Naive thymus-derived CD4-positive, alpha-beta T cell (primary cell): ENCODE measurements at regions of chrX and their contacts with region 1.

Region 1: DNA sequence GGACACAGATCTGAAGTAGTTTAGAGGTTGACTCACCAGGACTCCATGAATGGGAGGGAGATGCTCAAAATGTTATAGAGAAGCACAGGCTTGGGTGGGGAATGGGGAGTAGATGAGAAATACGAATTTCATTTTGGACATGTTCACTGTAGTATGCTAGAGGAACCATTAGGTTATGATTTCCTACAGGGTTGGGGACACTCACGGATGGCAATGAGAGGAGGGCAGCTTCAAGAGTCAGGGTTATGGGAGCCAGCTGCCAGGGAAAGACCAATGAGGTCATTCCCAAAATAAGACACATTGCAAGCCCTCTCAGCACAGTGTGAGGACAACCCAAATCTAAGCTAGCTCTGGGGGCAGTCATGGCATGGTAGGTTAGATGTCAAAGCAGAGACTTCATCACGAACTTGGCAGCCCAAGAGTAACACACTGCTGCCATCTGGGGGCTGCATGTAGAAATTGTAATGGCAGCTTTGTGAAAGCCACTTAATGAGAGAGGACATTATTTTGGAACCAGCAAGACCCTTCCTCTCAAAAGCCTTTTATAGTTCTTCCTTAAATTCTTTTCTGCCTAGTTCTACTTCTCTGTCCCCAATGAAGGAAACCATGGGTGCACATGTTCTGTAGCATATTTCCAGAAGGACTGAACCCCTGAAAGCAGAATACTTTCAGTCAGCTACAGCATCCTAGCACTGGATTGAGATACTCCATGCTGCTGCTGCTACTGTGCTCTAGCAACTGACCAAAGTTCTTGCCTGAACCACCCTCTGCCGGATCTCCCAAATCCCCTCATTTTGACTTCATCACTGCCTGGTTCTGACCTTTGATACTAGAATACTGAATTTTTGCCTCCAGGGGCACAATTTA is 16.2 kb upstream of the ZCCHC12 start:
- DNase-seq: peak in 6 of 9 donors; percentile 9 to 37 (median 23)
- ATAC-seq: peak; percentile 72
- H3K4me3 ChIP-seq: no peak overlapping the region
- H3K4me3 Mint-ChIP-seq: no peak overlapping the region
- H3K27ac ChIP-seq: no peak overlapping the region
- H3K27ac Mint-ChIP-seq: no peak overlapping the region
- H3K4me1 ChIP-seq: no peaks in the 10 kb centered on the region
- H3K4me1 Mint-ChIP-seq: peaks cover 0 to 2% (median 0%) of the 10 kb centered on the region in 7 donors
- H3K27me3 ChIP-seq: no peaks in the 10 kb centered on the region
- H3K27me3 Mint-ChIP-seq: peaks cover 0 to 18% (median 9%) of the 10 kb centered on the region in 5 donors

Region 2: DNA sequence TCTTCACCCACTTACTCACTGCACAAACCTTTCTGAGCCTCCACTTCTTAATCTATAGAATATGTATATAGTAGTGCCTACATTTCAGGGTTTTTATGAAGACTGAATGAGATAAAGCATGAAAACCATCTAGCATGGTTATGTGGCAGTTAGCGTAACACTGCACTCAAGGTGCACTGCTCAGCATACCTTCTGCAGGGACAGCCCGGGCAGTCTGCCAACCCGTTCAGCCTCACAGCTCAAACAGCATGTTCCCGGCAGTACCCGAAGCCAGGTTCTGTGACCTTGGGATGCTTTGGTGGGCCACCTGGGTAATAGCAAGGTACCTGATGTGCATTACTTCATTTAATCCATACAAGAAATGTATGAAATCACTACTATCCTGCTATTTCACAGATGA is 230.3 kb before region 1 on chrX:
- CTCF ChIA-PET with region 1: no interaction called
- POLR2A ChIA-PET with region 1: no interaction called
- intact Hi-C with region 1: no loop called
- DNase-seq: no peak
- ATAC-seq: no peak
- H3K4me3 ChIP-seq: no peak overlapping the region
- H3K4me3 Mint-ChIP-seq: no peak overlapping the region
- H3K27ac ChIP-seq: no peak overlapping the region
- H3K27ac Mint-ChIP-seq: no peak overlapping the region
- H3K4me1 ChIP-seq: no peaks in the 10 kb centered on the region
- H3K4me1 Mint-ChIP-seq: no peaks in the 10 kb centered on the region
- H3K27me3 ChIP-seq: no peaks in the 10 kb centered on the region
- H3K27me3 Mint-ChIP-seq: no peaks in the 10 kb centered on the region

Region 3: DNA sequence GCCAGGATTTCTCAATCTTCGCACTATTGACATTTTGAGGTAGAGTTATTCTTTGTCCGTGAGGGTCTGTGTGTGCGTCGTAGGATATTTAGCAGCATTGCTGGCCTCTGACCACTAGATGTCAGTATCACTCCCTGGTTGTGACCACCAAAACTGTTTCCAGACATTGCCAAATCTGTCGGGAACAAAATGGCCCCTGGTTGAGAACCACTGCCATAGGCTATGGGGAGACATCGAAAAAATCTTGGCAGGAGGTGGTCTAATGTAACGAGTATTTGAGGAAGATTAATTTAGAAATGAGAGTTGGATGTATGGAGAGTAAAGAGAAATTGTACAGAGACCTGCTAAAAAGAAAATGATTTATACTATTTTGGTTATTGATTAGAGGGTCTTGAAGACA is 203.4 kb before region 1 on chrX:
- CTCF ChIA-PET with region 1: interaction called, 3 read pairs
- POLR2A ChIA-PET with region 1: no interaction called
- intact Hi-C with region 1: loop called in 1 of 2 experiments (anchors 2 kb)
- DNase-seq: peak in 8 of 9 donors; percentile 2 to 40 (median 25)
- ATAC-seq: peak; percentile 77
- H3K4me3 ChIP-seq: no peak overlapping the region
- H3K4me3 Mint-ChIP-seq: peak overlapping the region in 6 of 10 donors; percentile 3 to 50 (median 39)
- H3K27ac ChIP-seq: no peak overlapping the region
- H3K27ac Mint-ChIP-seq: peak overlapping the region in 8 of 9 donors; percentile 33 to 91 (median 76)
- H3K4me1 ChIP-seq: no peaks in the 10 kb centered on the region
- H3K4me1 Mint-ChIP-seq: peaks cover 8 to 29% (median 20%) of the 10 kb centered on the region in 7 donors
- H3K27me3 ChIP-seq: no peaks in the 10 kb centered on the region
- H3K27me3 Mint-ChIP-seq: no peaks in the 10 kb centered on the region

Region 4: GRCh38 chrX:118644378-118644777 is 163.0 kb before region 1 on chrX:
- CTCF ChIA-PET with region 1: no interaction called
- POLR2A ChIA-PET with region 1: no interaction called
- intact Hi-C with region 1: loop called in 1 of 2 experiments (anchors 5 kb)
- DNase-seq: no peak
- ATAC-seq: no peak
- H3K4me3 ChIP-seq: no peak overlapping the region
- H3K4me3 Mint-ChIP-seq: no peak overlapping the region
- H3K27ac ChIP-seq: no peak overlapping the region
- H3K27ac Mint-ChIP-seq: peak overlapping the region in 2 of 9 donors; percentile 51 to 66
- H3K4me1 ChIP-seq: no peaks in the 10 kb centered on the region
- H3K4me1 Mint-ChIP-seq: peaks cover 0 to 6% (median 0%) of the 10 kb centered on the region in 7 donors
- H3K27me3 ChIP-seq: no peaks in the 10 kb centered on the region
- H3K27me3 Mint-ChIP-seq: no peaks in the 10 kb centered on the region

Region 5: GRCh38 chrX:118761939-118762707 is 45.3 kb before region 1 on chrX:
- CTCF ChIA-PET with region 1: no interaction called
- POLR2A ChIA-PET with region 1: no interaction called
- intact Hi-C with region 1: loop called in 1 of 2 experiments (anchors 1 kb)
- DNase-seq: no peak
- ATAC-seq: no peak
- H3K4me3 ChIP-seq: no peak overlapping the region
- H3K4me3 Mint-ChIP-seq: no peak overlapping the region
- H3K27ac ChIP-seq: no peak overlapping the region
- H3K27ac Mint-ChIP-seq: no peak overlapping the region
- H3K4me1 ChIP-seq: no peaks in the 10 kb centered on the region
- H3K4me1 Mint-ChIP-seq: no peaks in the 10 kb centered on the region
- H3K27me3 ChIP-seq: no peaks in the 10 kb centered on the region
- H3K27me3 Mint-ChIP-seq: peaks cover 0 to 2% (median 0%) of the 10 kb centered on the region in 5 donors

Region 6: DNA sequence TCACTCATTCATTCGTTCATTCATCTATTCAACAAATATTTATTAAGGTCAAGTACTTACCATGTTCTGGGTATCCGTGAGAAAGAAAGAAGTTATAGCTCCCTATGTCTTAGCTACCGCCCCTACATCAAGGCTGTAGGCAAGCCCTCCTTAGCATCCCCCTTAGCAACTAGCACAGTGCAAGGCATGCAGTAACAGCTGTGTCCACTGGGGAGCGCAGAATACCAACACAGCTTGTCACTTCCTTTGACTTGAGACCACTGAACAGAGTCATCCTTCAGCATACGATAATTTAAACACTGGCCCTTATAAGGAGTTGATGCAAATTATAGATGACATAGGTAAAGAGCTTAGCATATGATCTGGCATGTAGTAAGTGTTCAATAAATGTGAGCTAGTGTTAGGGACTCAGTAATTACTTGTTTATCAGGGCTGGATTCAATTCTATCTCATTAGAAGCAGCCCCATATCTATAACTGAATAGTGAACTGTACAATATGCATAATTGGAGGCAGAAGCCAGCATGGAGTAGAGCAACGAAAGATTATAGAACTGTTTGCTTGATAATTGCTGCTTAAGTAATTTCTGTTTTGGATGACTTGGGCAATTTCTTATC is 311.5 kb after region 1 on chrX:
- CTCF ChIA-PET with region 1: no interaction called
- POLR2A ChIA-PET with region 1: no interaction called
- intact Hi-C with region 1: no loop called
- DNase-seq: peak; percentile 3 to 41 (median 20)
- ATAC-seq: peak; percentile 75
- H3K4me3 ChIP-seq: no peak overlapping the region
- H3K4me3 Mint-ChIP-seq: no peak overlapping the region
- H3K27ac ChIP-seq: no peak overlapping the region
- H3K27ac Mint-ChIP-seq: no peak overlapping the region
- H3K4me1 ChIP-seq: no peaks in the 10 kb centered on the region
- H3K4me1 Mint-ChIP-seq: no peaks in the 10 kb centered on the region
- H3K27me3 ChIP-seq: no peaks in the 10 kb centered on the region
- H3K27me3 Mint-ChIP-seq: peaks cover 0 to 9% (median 4%) of the 10 kb centered on the region in 5 donors